Thyroid gland (tissue), 4 donors: ENCODE measurements at regions of chr14 and their contacts with region 1.

Region 1: DNA sequence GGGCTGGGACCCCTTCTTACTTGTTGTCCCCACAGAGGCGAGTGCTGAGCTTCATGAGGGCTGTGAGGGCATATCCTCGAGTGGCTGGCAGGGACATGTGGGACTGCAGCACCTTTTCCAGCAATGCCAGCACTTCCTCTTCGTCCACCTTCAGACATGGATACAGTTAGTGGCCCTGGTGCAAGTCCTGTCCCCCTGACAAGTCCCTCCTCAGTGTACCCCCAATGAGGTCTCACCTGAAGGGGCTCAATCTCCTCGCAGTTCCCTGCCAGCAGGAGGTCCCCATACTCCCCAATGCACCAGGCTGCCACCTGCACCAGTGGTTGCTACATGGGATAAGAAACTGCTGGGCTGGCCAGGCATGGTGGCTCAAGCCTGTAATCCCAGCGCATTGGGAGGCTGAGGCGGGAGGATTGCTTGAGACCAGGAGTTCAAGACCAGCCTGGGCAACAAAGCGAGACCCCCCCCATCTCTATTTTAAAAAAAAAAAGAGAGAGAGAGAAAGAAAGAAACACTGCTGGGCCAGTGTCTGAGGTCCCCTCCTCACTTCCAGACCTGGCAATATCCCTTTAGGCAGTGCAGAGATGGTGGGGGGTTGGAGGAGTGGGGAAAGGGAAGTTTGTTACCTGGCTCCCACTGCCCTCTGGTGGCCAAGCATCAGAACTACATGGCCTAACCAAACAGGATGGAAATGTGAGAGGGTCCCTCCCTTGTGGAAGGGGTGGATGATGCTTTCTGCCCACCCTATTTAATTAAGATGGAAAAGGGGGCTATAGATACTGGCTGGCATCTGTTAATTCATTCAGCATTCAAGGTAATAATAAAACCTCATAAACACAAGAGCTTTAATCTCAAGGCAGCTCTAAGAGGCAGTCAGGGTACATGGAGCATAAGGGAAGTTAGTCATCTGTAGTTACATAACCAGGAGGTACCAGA is 5.1 kb downstream of the AP1G2 start:
- DNase-seq: peak; percentile 44 to 50
- H3K4me3 ChIP-seq: no peak overlapping the region
- H3K27ac ChIP-seq: no peak overlapping the region
- H3K4me1 ChIP-seq: peaks cover 6 to 10% of the 10 kb centered on the region in 2 donors
- H3K27me3 ChIP-seq: no peaks in the 10 kb centered on the region
- CTCF ChIP-seq: peak; percentile 66 to 91 (median 80)
- POLR2A ChIP-seq: no peak

Region 2: DNA sequence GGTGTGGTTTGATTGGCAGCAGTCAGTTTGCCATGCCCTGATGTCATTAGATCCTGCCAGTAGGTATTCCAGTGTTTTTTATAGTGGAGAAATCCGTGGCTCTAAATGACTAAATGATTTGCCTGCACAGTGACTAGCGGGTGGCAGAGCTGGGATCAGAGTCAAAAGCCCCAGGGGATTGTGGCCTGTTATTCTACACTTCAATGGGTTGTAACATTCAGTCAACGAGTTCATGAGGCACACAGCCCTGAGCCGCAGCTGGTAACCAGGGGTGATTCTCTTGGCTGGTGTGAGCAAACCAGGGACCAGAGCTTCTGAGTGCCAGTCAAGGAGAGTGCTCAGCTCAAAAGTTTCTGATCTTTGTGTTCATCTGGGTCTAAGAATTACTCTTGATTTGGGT is 156.3 kb before region 1 on chr14:
- intact Hi-C with region 1: no loop called
- DNase-seq: no peak
- H3K4me3 ChIP-seq: no peak overlapping the region
- H3K27ac ChIP-seq: no peak overlapping the region
- H3K4me1 ChIP-seq: no peaks in the 10 kb centered on the region
- H3K27me3 ChIP-seq: no peaks in the 10 kb centered on the region
- CTCF ChIP-seq: no peak
- POLR2A ChIP-seq: no peak

Region 3: GRCh38 chr14:23464700-23465099 is 97.8 kb before region 1 on chr14:
- intact Hi-C with region 1: no loop called
- DNase-seq: no peak
- H3K4me3 ChIP-seq: no peak overlapping the region
- H3K27ac ChIP-seq: no peak overlapping the region
- H3K4me1 ChIP-seq: no peaks in the 10 kb centered on the region
- H3K27me3 ChIP-seq: no peaks in the 10 kb centered on the region
- CTCF ChIP-seq: no peak
- POLR2A ChIP-seq: no peak

Region 4: DNA sequence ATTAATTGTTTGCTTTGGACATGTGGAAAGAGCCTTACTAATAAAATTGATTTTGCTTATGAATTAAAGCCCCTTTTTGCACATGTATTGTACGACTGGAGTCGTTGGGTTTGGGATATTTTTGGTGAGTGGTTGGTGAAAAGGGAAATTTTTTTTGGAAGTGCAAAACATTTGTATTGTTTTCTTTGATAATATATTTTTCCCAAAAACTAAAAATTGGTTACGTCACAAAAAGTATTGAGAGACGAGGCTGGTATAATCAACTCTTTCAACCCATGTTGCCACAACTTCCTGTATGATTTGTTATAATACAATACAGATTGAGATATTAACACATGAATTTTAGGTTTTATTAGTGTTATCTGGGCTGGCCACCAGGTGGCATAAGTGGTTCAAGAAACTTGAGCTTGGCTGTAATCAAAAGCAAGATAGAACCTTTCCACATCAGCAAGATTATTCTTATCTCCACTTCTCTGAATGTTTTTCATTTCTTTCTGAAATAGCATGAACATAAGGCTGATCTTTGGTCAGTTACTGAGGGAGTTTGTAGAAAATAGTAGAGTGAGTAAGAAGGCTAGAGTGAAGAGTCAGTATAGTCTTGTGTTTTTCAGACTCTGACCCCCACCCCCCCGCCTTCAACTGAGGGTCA is 84.3 kb before region 1 on chr14:
- intact Hi-C with region 1: loop called (anchors 5 kb)
- DNase-seq: peak; percentile 47 to 62
- H3K4me3 ChIP-seq: no peak overlapping the region
- H3K27ac ChIP-seq: no peak overlapping the region
- H3K4me1 ChIP-seq: no peaks in the 10 kb centered on the region
- H3K27me3 ChIP-seq: no peaks in the 10 kb centered on the region
- CTCF ChIP-seq: peak; percentile 21 to 69 (median 58)
- POLR2A ChIP-seq: no peak